ENCODE measurements at regions of chr11 and their contacts with region 1.

Region 1: DNA sequence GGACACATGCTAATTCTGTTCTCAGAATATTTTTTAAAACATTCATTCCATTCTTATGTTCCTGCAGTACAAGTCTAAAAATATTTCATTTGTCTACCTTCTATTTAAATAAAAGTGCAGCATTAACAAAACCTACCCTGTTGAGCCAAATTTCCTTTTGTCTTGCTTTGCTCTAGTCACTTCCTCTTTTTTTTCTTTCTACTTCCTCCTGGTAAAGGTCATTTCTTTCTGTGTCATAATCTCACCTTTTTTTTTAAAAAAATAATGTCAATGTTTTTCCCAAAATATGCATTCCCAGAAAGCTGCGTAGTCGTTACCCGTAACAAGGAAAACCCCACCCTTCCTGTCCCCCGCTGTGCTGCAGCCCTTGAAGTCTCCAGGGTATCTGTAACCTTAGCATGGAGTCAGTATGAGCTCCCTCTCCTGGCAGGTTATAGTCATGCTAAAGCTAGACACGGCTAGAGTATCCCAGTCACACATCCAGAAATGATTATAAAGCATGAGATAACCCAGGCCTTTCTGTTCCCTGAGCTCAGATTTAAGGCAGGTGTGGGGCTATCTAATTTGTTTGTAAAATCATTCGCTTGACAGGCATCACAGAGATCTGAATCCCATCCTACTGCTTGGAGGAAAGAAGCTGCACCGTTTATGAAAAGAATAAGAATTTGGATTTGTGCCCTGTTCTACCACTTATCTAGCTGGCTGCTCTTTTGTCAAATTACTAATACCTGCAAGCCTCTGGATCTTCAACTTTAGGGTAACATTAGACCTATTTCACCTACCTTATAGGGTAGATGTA is 51.1 kb upstream of the EED start:
- DNase-seq: peak; percentile 92
- H3K4me3 Mint-ChIP-seq: peak overlapping the region; percentile 69
- H3K27ac Mint-ChIP-seq: peak overlapping the region; percentile 57
- H3K4me1 Mint-ChIP-seq: peaks cover 15% of the 10 kb centered on the region
- H3K27me3 Mint-ChIP-seq: no peaks in the 10 kb centered on the region
- CTCF ChIP-seq: peak; percentile 64

Region 2: GRCh38 chr11:85854557-85855340 is 338.7 kb before region 1 on chr11:
- CTCF ChIA-PET with region 1: interaction called, 11 read pairs
- POLR2A ChIA-PET with region 1: interaction called, 5 read pairs
- intact Hi-C with region 1: loop called (anchors 1 kb)
- DNase-seq: peak; percentile 85
- H3K4me3 Mint-ChIP-seq: peak overlapping the region; percentile 76
- H3K27ac Mint-ChIP-seq: peak overlapping the region; percentile 87
- H3K4me1 Mint-ChIP-seq: no peaks in the 10 kb centered on the region
- H3K27me3 Mint-ChIP-seq: no peaks in the 10 kb centered on the region
- CTCF ChIP-seq: peak; percentile 86

Region 3: GRCh38 chr11:86068951-86069407 is 124.5 kb before region 1 on chr11 and contains the start of gene PICALM:
- CTCF ChIA-PET with region 1: interaction called, 17 read pairs
- POLR2A ChIA-PET with region 1: interaction called, 29 read pairs
- intact Hi-C with region 1: loop called (anchors 1 kb)
- DNase-seq: peak; percentile 98
- H3K4me3 Mint-ChIP-seq: peak within 1 kb of the TSS; percentile 98
- H3K27ac Mint-ChIP-seq: peak within 1 kb of the TSS; percentile 99
- H3K4me1 Mint-ChIP-seq: peaks cover 17% of the 10 kb centered on the region
- H3K27me3 Mint-ChIP-seq: no peaks in the 10 kb centered on the region
- CTCF ChIP-seq: no peak
- total RNA-seq, gene PICALM: 137 and 141 TPM in 2 replicates

Region 4: GRCh38 chr11:86097980-86098379 is 95.5 kb before region 1 on chr11:
- CTCF ChIA-PET with region 1: no interaction called
- POLR2A ChIA-PET with region 1: no interaction called
- intact Hi-C with region 1: no loop called
- DNase-seq: no peak
- H3K4me3 Mint-ChIP-seq: no peak overlapping the region
- H3K27ac Mint-ChIP-seq: no peak overlapping the region
- H3K4me1 Mint-ChIP-seq: peaks cover 11% of the 10 kb centered on the region
- H3K27me3 Mint-ChIP-seq: no peaks in the 10 kb centered on the region
- CTCF ChIP-seq: no peak

Region 5: DNA sequence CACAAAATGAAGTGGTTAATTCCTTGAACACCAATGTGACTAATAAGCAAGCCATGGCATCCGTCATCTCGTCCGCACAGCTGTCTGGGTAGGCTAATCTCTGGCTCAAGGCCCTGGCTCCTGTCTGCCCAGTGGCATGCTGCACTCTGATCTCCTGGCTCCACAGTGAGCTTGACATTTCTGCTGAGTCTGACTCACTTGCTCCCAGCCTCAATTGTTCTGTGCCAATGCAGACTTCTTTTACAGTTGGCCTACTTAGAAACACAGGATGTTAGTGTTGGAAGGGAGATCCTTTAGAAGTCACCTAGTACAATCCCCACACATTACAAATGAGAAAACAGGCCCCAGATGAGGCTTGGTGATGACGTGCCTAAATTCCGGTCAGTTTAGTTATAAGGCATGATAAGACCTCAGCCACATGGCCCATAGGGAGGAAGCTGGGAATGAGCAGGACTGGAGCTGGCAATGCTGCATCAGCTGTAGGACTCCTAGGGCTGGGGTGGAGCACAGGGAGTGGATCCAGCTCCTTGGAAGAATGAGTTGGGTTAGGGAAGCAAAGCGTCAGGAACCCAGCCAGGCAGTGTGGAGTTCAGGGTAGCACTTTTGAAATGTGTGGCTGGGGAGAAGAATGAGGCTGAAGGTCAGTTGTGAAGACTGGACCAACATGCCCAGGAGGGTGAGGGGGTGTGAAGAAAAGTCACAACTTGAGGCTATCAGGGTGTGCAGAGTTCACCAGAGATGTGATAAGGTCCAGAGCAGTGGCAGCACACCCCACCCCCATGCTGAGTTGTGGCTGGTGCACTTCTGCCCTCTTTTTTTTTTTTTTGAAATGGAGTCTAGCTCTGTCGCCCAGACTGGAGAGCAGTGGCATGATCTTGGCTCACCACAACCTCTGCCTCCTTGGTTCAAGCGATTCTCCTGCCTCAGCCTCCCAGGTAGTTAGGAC is 19.1 kb before region 1 on chr11:
- CTCF ChIA-PET with region 1: interaction called, 10 read pairs
- POLR2A ChIA-PET with region 1: no interaction called
- intact Hi-C with region 1: no loop called
- DNase-seq: peak; percentile 93
- H3K4me3 Mint-ChIP-seq: no peak overlapping the region
- H3K27ac Mint-ChIP-seq: no peak overlapping the region
- H3K4me1 Mint-ChIP-seq: peaks cover 23% of the 10 kb centered on the region
- H3K27me3 Mint-ChIP-seq: no peaks in the 10 kb centered on the region
- CTCF ChIP-seq: no peak

Region 6: DNA sequence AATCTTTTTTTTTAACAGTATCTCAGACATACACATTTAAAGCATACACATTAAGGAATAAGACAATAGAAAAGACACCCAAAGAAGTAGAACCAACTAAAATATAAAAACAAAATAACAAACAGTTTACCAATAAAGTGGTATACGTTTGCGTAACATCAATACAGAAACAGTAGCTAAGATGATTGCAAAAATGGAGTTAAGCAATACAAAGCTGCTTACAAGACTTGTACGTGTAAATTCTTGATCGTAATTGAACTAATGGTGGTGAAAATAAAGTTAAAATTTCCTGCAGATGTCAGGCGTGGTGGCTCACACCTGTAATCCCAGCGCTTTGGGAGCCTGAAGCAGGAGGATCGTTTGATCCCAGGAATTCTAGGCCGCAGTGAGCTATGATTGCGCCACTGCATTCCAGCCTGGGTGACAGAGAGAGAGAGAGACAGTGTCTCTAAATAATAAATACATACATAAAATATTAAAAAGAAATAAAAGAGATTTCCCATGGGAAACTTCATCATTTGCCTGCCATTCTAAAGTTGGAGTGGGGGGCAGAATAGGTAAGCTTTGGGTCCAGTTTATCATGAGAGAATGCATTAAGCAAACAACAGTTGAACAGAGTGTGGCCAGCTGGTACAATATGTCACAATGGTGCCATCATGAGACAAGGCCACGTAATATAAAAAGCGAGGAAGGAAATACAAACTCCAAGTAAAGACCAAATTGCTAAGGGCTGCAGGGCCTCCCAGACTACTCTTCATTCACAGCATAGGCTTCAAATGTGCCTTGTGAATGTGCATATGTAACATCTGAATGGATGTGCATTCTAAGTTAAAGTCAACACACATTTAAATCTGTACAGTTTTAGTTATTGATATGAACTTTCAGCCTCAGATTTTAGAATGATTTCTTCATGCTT is 12.2 kb after region 1 on chr11:
- CTCF ChIA-PET with region 1: interaction called, 32 read pairs
- POLR2A ChIA-PET with region 1: interaction called, 7 read pairs
- intact Hi-C with region 1: no loop called
- DNase-seq: no peak
- H3K4me3 Mint-ChIP-seq: no peak overlapping the region
- H3K27ac Mint-ChIP-seq: no peak overlapping the region
- H3K4me1 Mint-ChIP-seq: no peaks in the 10 kb centered on the region
- H3K27me3 Mint-ChIP-seq: no peaks in the 10 kb centered on the region
- CTCF ChIP-seq: no peak

Region 7: GRCh38 chr11:86230921-86231430 is 37.5 kb after region 1 on chr11:
- CTCF ChIA-PET with region 1: interaction called, 10 read pairs
- POLR2A ChIA-PET with region 1: no interaction called
- intact Hi-C with region 1: no loop called
- DNase-seq: peak; percentile 40
- H3K4me3 Mint-ChIP-seq: no peak overlapping the region
- H3K27ac Mint-ChIP-seq: no peak overlapping the region
- H3K4me1 Mint-ChIP-seq: peaks cover 18% of the 10 kb centered on the region
- H3K27me3 Mint-ChIP-seq: no peaks in the 10 kb centered on the region
- CTCF ChIP-seq: no peak

Measured in MCF 10A (cell line).